ENCODE measurements at regions of chr9 and their contacts with region 1.

Region 1: GRCh38 chr9:18114559-18115475 is 359.1 kb upstream of the ADAMTSL1 start:
- DNase-seq: no peak
- H3K4me3 ChIP-seq: no peak overlapping the region
- H3K27ac ChIP-seq: no peak overlapping the region
- H3K4me1 ChIP-seq: no peaks in the 10 kb centered on the region
- H3K27me3 ChIP-seq: no peaks in the 10 kb centered on the region
- CTCF ChIP-seq: no peak

Region 2: GRCh38 chr9:18032636-18033035 is 82.2 kb before region 1 on chr9:
- CTCF ChIA-PET with region 1: no interaction called
- dilution Hi-C with region 1: loop called (anchors 5 kb)
- in situ Hi-C with region 1: no loop called
- intact Hi-C with region 1: no loop called
- DNase-seq: no peak
- H3K4me3 ChIP-seq: no peak overlapping the region
- H3K27ac ChIP-seq: no peak overlapping the region
- H3K4me1 ChIP-seq: no peaks in the 10 kb centered on the region
- H3K27me3 ChIP-seq: no peaks in the 10 kb centered on the region
- CTCF ChIP-seq: no peak